Cardiac septum (tissue), 1 donor: ENCODE measurements at regions of chr22 and their contacts with region 1.

Region 1: DNA sequence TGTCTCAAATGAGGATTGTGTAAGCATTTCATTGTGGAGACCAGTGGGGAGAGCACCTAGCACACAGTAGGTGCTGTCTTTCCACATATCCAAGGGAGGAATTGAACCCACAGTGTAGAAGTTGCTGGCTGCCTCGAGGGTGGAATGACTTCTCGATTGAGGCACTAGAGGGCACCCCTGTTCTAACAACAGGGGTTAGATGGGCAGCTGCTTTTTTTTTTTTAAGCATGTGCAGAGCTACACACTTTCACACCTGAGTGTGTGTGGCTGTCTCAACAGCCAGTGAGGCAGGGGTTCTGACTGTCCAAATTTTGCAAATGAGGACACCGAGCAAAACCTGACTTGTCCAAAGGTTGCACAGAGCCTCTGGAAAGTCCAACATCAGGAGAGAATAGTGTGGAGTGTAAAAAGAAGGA is 118.2 kb upstream of the CRYBB3 start:
- DNase-seq: no peak

Region 2: GRCh38 chr22:24994070-24994763 is 87.2 kb before region 1 on chr22:
- intact Hi-C with region 1: no loop called
- DNase-seq: no peak

Region 3: GRCh38 chr22:25110846-25111578 is 29.6 kb after region 1 on chr22:
- intact Hi-C with region 1: loop called (anchors 2 kb)
- DNase-seq: no peak

Region 4: GRCh38 chr22:25172153-25172552 is 90.7 kb after region 1 on chr22:
- intact Hi-C with region 1: loop called (anchors 10 kb)
- DNase-seq: no peak

Region 5: GRCh38 chr22:25334162-25334490 is 252.7 kb after region 1 on chr22:
- intact Hi-C with region 1: loop called (anchors 10 kb)
- DNase-seq: no peak